CD8-positive, alpha-beta memory T cell (primary cell): ENCODE measurements at regions of chr16 and their contacts with region 1.

Region 1: DNA sequence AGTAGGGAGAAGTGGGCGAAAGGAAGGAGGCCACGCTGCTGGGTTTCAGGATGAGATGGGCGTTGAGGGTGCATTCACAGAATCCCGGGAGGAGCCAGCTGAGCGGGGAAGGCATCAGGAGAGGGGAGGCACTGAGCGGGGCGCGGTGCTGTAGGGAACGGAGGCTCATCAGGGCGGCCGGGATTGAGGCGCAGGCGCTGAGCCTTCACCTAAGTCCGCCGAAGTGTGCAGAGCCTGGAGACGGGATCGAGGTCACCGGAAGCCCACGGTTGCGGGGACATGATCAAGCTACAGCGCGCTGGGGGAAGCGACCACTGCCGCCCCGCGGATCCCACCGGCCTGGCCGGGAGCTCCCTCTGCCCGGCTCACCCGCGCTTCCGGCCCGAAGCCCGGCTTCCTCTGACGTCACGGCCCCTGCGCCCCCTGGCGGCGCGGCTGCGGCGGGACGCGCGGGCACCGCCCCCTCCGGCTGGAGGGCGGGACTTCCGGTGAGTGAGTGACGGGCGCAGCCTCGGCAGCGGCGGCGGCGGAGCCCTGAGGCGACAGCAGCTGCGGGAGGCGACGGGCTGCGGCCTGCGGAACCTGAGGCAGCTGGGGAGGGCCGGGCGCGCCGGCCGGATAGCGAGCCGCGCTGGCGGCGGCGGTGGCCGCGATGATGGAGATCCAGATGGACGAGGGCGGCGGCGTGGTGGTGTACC is at the start of gene MAPK8IP3:
- DNase-seq: peak; percentile 92 to 98 (median 94)
- H3K4me3 ChIP-seq: peak within 1 kb of the TSS; percentile 96
- H3K4me3 Mint-ChIP-seq: peak within 1 kb of the TSS; percentile 93 to 100 (median 98)
- H3K27ac ChIP-seq: peak within 1 kb of the TSS; percentile 91
- H3K27ac Mint-ChIP-seq: peak within 1 kb of the TSS; percentile 94 to 100 (median 99)
- H3K4me1 ChIP-seq: peaks cover 33% of the 10 kb centered on the region
- H3K4me1 Mint-ChIP-seq: peaks cover 36 to 49% (median 41%) of the 10 kb centered on the region in 3 donors
- H3K27me3 ChIP-seq: no peaks in the 10 kb centered on the region
- H3K27me3 Mint-ChIP-seq: peaks cover 0 to 3% of the 10 kb centered on the region in 2 donors
- total RNA-seq, gene MAPK8IP3: 57.1 to 63.2 TPM

Region 2: GRCh38 chr16:1420111-1420540 is 285.7 kb before region 1 on chr16:
- CTCF ChIA-PET with region 1: no interaction called
- POLR2A ChIA-PET with region 1: interaction called, 15 read pairs
- DNase-seq: no peak
- H3K4me3 ChIP-seq: peak overlapping the region; percentile 91
- H3K4me3 Mint-ChIP-seq: peak overlapping the region; percentile 90 to 97 (median 94)
- H3K27ac ChIP-seq: peak overlapping the region; percentile 93
- H3K27ac Mint-ChIP-seq: peak overlapping the region; percentile 72 to 100 (median 97)
- H3K4me1 ChIP-seq: peaks cover 11% of the 10 kb centered on the region
- H3K4me1 Mint-ChIP-seq: peaks cover 17 to 26% (median 19%) of the 10 kb centered on the region in 3 donors
- H3K27me3 ChIP-seq: no peaks in the 10 kb centered on the region
- H3K27me3 Mint-ChIP-seq: peaks cover 0 to 3% of the 10 kb centered on the region in 2 donors

Region 3: DNA sequence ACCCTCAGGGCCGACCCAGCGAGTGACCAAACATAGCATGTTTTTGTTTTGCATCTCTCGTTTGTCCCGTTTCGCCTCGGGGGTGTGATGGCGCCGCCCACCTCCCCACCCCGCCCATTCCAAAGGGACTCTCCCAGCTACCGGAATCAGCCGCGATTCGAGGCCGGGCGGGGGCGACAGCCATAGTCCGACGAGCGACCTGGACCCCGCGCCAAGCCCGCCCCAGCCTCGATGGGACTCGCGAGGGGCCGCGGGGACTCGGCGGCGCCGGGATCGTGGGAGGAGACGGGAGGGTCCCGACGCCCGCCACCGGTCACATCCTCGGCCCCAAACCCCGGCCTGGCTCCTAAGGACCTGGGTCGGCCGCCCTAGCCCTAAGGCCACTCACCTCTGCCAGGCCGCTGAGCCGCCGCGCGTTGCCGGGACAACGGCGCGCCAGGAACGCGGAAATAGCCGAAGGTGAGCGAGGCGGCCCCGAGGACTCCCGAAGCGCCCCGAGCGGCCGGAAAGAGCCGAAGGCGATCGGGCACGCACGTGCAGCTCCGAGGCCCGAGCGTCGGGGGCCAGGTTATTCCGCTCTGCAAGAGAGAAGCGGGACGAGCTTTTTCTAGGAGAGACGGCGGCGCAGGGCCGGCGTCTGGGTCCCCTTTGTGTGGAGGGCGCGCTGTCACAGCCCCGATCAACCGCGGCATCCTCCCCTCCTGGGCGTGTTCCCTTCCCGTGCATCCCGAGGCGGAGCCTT is 95.4 kb before region 1 on chr16:
- CTCF ChIA-PET with region 1: interaction called, 8 read pairs
- POLR2A ChIA-PET with region 1: interaction called, 13 read pairs
- DNase-seq: peak; percentile 84 to 93 (median 89)
- H3K4me3 ChIP-seq: peak overlapping the region; percentile 50
- H3K4me3 Mint-ChIP-seq: peak overlapping the region; percentile 68 to 85 (median 81)
- H3K27ac ChIP-seq: peak overlapping the region; percentile 54
- H3K27ac Mint-ChIP-seq: peak overlapping the region in 6 of 8 donors; percentile 17 to 99 (median 84)
- H3K4me1 ChIP-seq: peaks cover 31% of the 10 kb centered on the region
- H3K4me1 Mint-ChIP-seq: peaks cover 23 to 36% (median 28%) of the 10 kb centered on the region in 3 donors
- H3K27me3 ChIP-seq: peaks cover 6% of the 10 kb centered on the region
- H3K27me3 Mint-ChIP-seq: peaks cover 11 to 16% of the 10 kb centered on the region in 2 donors

Region 4: GRCh38 chr16:1677802-1678496 is 27.9 kb before region 1 on chr16 and contains the start of gene JPT2:
- CTCF ChIA-PET with region 1: interaction called, 25 read pairs
- POLR2A ChIA-PET with region 1: interaction called, 28 read pairs
- DNase-seq: peak; percentile 92 to 95 (median 93)
- H3K4me3 ChIP-seq: peak within 1 kb of the TSS; percentile 76
- H3K4me3 Mint-ChIP-seq: peak within 1 kb of the TSS; percentile 88 to 95 (median 90)
- H3K27ac ChIP-seq: peak within 1 kb of the TSS; percentile 61
- H3K27ac Mint-ChIP-seq: peak within 1 kb of the TSS; percentile 76 to 95 (median 86)
- H3K4me1 ChIP-seq: peaks cover 17% of the 10 kb centered on the region
- H3K4me1 Mint-ChIP-seq: peaks cover 14 to 43% (median 32%) of the 10 kb centered on the region in 3 donors
- H3K27me3 ChIP-seq: no peaks in the 10 kb centered on the region
- H3K27me3 Mint-ChIP-seq: no peaks in the 10 kb centered on the region
- total RNA-seq, gene JPT2: 106 TPM

Region 5: DNA sequence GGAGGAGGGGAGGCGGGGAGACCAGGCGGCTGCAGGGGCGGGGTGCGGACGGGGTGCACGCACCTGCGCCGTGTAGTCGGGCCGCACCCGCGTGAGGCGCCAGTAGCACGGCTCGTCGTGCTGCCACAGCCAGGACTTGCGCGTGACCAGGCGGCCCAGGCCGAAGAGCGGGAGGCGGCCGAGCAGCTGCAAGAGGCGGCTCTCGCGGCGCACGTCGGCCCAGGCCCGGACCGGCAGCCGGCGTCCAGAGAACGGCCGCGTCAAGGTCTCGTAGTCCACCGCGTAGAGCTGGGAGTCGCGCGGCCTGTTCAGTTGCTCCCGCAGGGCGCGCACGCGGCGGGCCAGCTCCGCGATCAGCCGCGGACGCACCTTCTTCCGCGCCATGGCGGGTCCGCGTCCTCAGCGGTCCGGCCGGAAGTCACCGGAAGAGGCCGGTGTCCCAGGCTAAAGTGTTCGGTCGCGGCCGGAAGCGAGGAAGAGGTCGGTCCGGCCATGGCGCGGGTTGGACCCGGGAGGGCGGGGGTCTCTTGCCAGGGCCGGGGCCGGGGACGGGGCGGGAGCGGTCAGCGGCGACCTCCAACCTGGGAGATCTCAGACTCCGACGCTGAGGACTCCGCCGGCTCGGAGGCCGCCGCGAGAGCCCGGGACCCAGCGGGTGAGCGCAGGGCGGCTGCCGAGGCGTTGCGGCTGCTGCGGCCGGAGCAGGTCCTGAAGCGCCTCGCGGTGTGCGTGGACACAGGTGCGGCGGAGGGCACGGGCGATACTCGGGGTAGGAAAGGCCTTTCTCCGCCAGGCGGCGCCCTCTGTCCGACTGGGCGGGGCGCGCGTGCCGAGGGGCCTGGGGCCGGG is 67.1 kb after region 1 on chr16 and contains the starts of genes EME2 and MRPS34:
- CTCF ChIA-PET with region 1: interaction called, 11 read pairs
- POLR2A ChIA-PET with region 1: interaction called, 19 read pairs
- DNase-seq: peak; percentile 66 to 81 (median 72)
- H3K4me3 ChIP-seq: peak within 1 kb of the TSS; percentile 96
- H3K4me3 Mint-ChIP-seq: peak within 1 kb of the TSS; percentile 89 to 98 (median 96)
- H3K27ac ChIP-seq: peak within 1 kb of the TSS; percentile 79
- H3K27ac Mint-ChIP-seq: peak within 1 kb of the TSS; percentile 85 to 97 (median 96)
- H3K4me1 ChIP-seq: peaks cover 21% of the 10 kb centered on the region
- H3K4me1 Mint-ChIP-seq: peaks cover 8 to 30% (median 18%) of the 10 kb centered on the region in 3 donors
- H3K27me3 ChIP-seq: no peaks in the 10 kb centered on the region
- H3K27me3 Mint-ChIP-seq: no peaks in the 10 kb centered on the region
- total RNA-seq, gene EME2: 21.0 to 21.6 TPM
- total RNA-seq, gene MRPS34: 172 to 176 TPM

Region 6: DNA sequence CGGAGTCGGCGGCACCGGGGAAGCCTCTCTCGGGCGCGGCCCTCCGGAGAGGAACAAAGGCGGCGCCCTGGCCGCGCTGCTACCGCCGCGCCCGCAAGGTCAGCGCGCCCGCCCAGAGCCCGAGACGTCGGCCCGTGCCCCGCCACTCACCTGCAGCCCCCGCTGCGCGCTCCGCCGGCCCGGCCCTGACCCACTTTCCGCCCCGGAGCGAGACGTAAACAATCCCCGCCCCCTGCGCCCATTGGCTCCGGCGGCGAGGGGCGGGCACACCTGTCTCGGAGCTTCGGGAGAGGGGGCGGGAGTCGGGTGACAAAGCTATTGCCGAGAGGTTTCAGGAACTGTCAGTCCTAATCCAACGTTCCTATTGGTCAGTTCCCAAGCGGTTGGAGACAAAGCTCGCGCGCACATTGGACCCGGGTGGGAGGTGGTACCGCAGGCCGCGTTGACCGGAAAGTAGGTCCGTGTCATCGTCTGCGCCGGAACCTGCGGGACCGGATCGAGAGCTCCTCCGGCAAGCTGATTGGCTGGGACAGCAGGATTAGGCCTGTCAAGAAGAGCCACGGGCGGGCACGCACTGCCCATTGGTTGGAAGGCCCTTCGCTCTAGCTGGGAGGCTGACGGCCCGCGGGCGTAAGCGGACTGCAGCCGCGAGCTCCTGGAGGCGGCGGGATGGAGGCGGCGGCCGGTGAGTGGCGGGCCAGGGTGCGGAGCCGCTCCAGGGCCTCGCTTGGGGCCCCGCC is 76.7 kb after region 1 on chr16 and contains the starts of genes NUBP2 and SPSB3:
- CTCF ChIA-PET with region 1: interaction called, 10 read pairs
- POLR2A ChIA-PET with region 1: interaction called, 15 read pairs
- DNase-seq: peak; percentile 98 to 99 (median 98)
- H3K4me3 ChIP-seq: peak within 1 kb of the TSS; percentile 82
- H3K4me3 Mint-ChIP-seq: peak within 1 kb of the TSS; percentile 89 to 96 (median 92)
- H3K27ac ChIP-seq: peak within 1 kb of the TSS; percentile 86
- H3K27ac Mint-ChIP-seq: peak within 1 kb of the TSS; percentile 87 to 97 (median 92)
- H3K4me1 ChIP-seq: peaks cover 35% of the 10 kb centered on the region
- H3K4me1 Mint-ChIP-seq: peaks cover 18 to 53% (median 26%) of the 10 kb centered on the region in 3 donors
- H3K27me3 ChIP-seq: no peaks in the 10 kb centered on the region
- H3K27me3 Mint-ChIP-seq: peaks cover 0 to 2% of the 10 kb centered on the region in 2 donors
- total RNA-seq, gene NUBP2: 73.9 to 82.8 TPM
- total RNA-seq, gene SPSB3: 30.6 to 31.5 TPM

Region 7: GRCh38 chr16:2082160-2082982 is 376.5 kb after region 1 on chr16:
- CTCF ChIA-PET with region 1: no interaction called
- POLR2A ChIA-PET with region 1: no interaction called
- DNase-seq: no peak
- H3K4me3 ChIP-seq: no peak overlapping the region
- H3K4me3 Mint-ChIP-seq: no peak overlapping the region
- H3K27ac ChIP-seq: no peak overlapping the region
- H3K27ac Mint-ChIP-seq: peak overlapping the region in 1 of 8 donors; percentile 42
- H3K4me1 ChIP-seq: no peaks in the 10 kb centered on the region
- H3K4me1 Mint-ChIP-seq: peaks cover 0 to 3% (median 0%) of the 10 kb centered on the region in 3 donors
- H3K27me3 ChIP-seq: no peaks in the 10 kb centered on the region
- H3K27me3 Mint-ChIP-seq: no peaks in the 10 kb centered on the region